ENCODE measurements at regions of chrX and their contacts with region 1.

Region 1: GRCh38 chrX:120726294-120726693 is 96.4 kb upstream of the C1GALT1C1 start:
- DNase-seq: peak; percentile 73
- ATAC-seq: peak; percentile 99
- H3K4me3 ChIP-seq: no peak overlapping the region
- H3K27ac ChIP-seq: peak overlapping the region; percentile 50
- H3K4me1 ChIP-seq: no peaks in the 10 kb centered on the region; the same call in 1 of the 2 replicates
- H3K27me3 ChIP-seq: no peaks in the 10 kb centered on the region
- CTCF ChIP-seq: no peak
- EP300 ChIP-seq: peak in 1 of 2 experiments; percentile 42; a peak in 2 of 4 replicates
- POLR2A ChIP-seq: no peak
- RAD21 ChIP-seq: no peak

Region 2: DNA sequence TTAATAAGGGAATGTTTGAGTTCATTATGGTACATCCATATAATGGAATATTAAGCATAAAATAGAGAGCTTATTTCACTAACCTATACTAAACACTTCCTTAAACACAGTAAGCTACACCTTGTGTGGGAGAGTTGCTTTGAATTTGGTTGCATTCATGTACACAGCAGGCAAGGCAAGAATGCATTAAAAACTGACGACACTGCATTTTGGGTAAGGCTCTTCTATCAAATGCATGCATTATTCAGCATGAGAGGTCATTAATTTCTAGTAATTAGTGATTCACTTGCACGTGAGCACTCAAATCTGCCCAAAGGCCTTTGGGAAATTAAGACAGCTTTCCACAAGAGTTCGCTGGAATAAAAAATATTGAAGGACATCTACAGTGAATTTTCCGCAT is 87.7 kb before region 1 on chrX:
- CTCF ChIA-PET with region 1: no interaction called
- POLR2A ChIA-PET with region 1: no interaction called
- RAD21 ChIA-PET with region 1: interaction called, 3 read pairs
- SMC1A ChIA-PET with region 1: no interaction called
- in situ Hi-C with region 1: no loop called
- intact Hi-C with region 1: loop called (anchors 1 kb)
- DNase-seq: no peak
- ATAC-seq: no peak
- H3K4me3 ChIP-seq: no peak overlapping the region
- H3K27ac ChIP-seq: no peak overlapping the region
- H3K4me1 ChIP-seq: peaks cover 2% of the 10 kb centered on the region; the same call in 1 of the 2 replicates
- H3K27me3 ChIP-seq: no peaks in the 10 kb centered on the region
- CTCF ChIP-seq: no peak
- EP300 ChIP-seq: no peak
- POLR2A ChIP-seq: no peak
- RAD21 ChIP-seq: no peak

Region 3: DNA sequence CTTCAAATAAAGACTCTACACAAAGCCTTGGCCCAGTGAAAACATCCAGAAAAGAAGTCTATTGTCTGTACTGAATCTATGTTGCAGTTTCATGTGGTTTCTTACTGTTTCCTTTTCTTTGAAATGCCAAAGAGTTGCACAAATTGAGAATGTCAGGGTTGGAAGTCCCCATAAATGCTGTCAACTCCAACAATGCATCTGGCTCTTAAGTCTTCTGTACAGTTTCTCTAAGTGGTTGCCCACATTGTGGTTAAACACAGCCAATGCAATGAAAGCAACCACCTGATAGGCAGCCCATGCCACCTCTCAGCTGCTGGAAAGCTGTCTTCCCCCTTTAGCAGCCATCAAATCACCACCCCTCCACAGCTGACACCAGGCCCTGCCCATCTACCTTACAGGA is 29.2 kb before region 1 on chrX:
- CTCF ChIA-PET with region 1: interaction called, 3 read pairs
- POLR2A ChIA-PET with region 1: no interaction called
- RAD21 ChIA-PET with region 1: interaction called, 5 read pairs
- SMC1A ChIA-PET with region 1: interaction called, 5 read pairs
- in situ Hi-C with region 1: no loop called
- intact Hi-C with region 1: loop called (anchors 2 kb)
- DNase-seq: peak; percentile 66
- ATAC-seq: peak; percentile 97
- H3K4me3 ChIP-seq: no peak overlapping the region
- H3K27ac ChIP-seq: peak overlapping the region; percentile 22
- H3K4me1 ChIP-seq: peaks cover 11% of the 10 kb centered on the region
- H3K27me3 ChIP-seq: no peaks in the 10 kb centered on the region
- CTCF ChIP-seq: no peak
- EP300 ChIP-seq: no peak
- POLR2A ChIP-seq: no peak
- RAD21 ChIP-seq: no peak

Region 4: GRCh38 chrX:120749141-120749846 is 23.0 kb after region 1 on chrX:
- CTCF ChIA-PET with region 1: interaction called, 15 read pairs
- POLR2A ChIA-PET with region 1: interaction called, 6 read pairs
- RAD21 ChIA-PET with region 1: interaction called, 16 read pairs
- SMC1A ChIA-PET with region 1: interaction called, 66 read pairs
- in situ Hi-C with region 1: no loop called
- intact Hi-C with region 1: no loop called
- DNase-seq: no peak
- ATAC-seq: peak; percentile 73
- H3K4me3 ChIP-seq: no peak overlapping the region
- H3K27ac ChIP-seq: no peak overlapping the region; the same call in 1 of the 2 replicates
- H3K4me1 ChIP-seq: peaks cover 16% of the 10 kb centered on the region
- H3K27me3 ChIP-seq: no peaks in the 10 kb centered on the region
- CTCF ChIP-seq: no peak
- EP300 ChIP-seq: no peak
- POLR2A ChIP-seq: no peak
- RAD21 ChIP-seq: no peak

Region 5: GRCh38 chrX:120769576-120770341 is 43.5 kb after region 1 on chrX:
- CTCF ChIA-PET with region 1: interaction called, 7 read pairs
- POLR2A ChIA-PET with region 1: no interaction called
- RAD21 ChIA-PET with region 1: interaction called, 3 read pairs
- SMC1A ChIA-PET with region 1: interaction called, 11 read pairs
- in situ Hi-C with region 1: no loop called
- intact Hi-C with region 1: no loop called
- DNase-seq: no peak
- ATAC-seq: peak; percentile 51; the same call in 2 of the 3 replicates
- H3K4me3 ChIP-seq: no peak overlapping the region
- H3K27ac ChIP-seq: no peak overlapping the region
- H3K4me1 ChIP-seq: no peaks in the 10 kb centered on the region
- H3K27me3 ChIP-seq: no peaks in the 10 kb centered on the region
- CTCF ChIP-seq: peak; percentile 33 to 47 (median 46); a peak in 4 of 6 replicates
- EP300 ChIP-seq: no peak
- POLR2A ChIP-seq: no peak
- RAD21 ChIP-seq: peak; percentile 74

Measured in GM12878 (cell line).